PC-9 (cell line): ENCODE measurements at regions of chr11 and their contacts with region 1.

Region 1: DNA sequence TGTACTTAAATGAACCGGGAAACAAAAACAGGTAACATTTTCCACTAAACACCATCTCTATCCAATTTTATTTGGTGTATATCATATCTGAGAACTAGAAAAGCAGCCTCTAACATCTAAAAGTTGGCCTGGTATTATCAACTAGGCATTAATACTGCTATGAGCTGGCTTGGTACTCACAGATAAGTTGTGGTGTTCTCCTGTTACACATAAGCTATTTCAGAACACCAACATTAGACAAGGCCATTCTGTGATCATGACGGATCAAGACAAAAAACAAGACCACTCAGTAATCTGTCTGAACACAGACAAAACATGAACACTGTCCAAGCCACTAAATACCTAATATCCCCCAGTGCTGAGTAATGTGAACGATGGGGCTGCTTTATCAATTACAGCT is 11.9 kb downstream of the RIC3 start:
- DNase-seq: no peak
- H3K4me3 ChIP-seq: no peak overlapping the region
- H3K27ac ChIP-seq: no peak overlapping the region
- H3K4me1 ChIP-seq: no peaks in the 10 kb centered on the region
- H3K27me3 ChIP-seq: no peaks in the 10 kb centered on the region
- CTCF ChIP-seq: no peak

Region 2: DNA sequence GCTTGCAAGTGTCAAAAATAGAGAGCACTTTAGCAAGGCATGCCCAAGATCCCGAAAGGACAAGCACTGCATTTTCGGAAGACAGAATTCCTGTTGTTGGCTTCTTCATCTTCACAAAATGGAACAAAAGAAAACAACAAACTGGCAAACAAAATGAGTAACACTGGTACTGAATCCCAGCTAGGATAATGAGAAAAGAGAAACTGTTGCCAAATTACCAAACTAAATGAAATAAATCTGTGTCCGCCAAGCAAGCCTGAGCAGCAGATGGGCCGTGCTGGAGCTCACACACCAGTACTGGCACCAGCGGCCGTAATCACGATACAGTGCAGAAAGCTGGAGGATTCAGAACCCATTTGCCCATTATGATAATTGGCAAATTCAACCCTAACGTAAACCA is 45.2 kb before region 1 on chr11:
- CTCF ChIA-PET with region 1: no interaction called
- POLR2A ChIA-PET with region 1: no interaction called
- intact Hi-C with region 1: no loop called
- DNase-seq: no peak
- H3K4me3 ChIP-seq: no peak overlapping the region
- H3K27ac ChIP-seq: no peak overlapping the region
- H3K4me1 ChIP-seq: no peaks in the 10 kb centered on the region
- H3K27me3 ChIP-seq: no peaks in the 10 kb centered on the region
- CTCF ChIP-seq: no peak

Region 3: DNA sequence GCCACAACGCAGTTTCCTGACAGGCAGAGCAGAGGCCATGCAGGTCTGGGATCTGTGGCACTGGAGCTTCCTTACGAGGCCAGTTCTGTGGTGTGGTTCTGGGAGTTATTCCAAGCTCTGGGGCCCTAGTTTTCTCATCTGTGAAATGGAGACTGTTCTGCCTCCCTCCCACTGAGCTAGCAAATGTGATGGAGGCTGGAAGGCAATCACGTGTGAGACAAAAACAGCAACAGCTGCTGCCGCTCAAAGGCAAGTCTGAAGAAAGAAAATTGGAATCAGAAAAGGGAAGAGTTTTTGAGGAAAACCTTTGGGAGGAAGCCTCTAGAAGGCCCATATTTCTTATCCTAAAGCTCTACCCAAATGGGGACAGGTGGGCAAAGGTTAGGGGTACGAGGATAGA is 20.3 kb after region 1 on chr11:
- CTCF ChIA-PET with region 1: no interaction called
- POLR2A ChIA-PET with region 1: interaction called, 14 read pairs
- intact Hi-C with region 1: no loop called
- DNase-seq: no peak
- H3K4me3 ChIP-seq: no peak overlapping the region
- H3K27ac ChIP-seq: no peak overlapping the region
- H3K4me1 ChIP-seq: no peaks in the 10 kb centered on the region
- H3K27me3 ChIP-seq: peaks cover 15% of the 10 kb centered on the region; the same call in 1 of the 2 replicates
- CTCF ChIP-seq: no peak

Region 4: GRCh38 chr11:8688414-8689362 is 531.8 kb after region 1 on chr11:
- CTCF ChIA-PET with region 1: no interaction called
- POLR2A ChIA-PET with region 1: no interaction called
- intact Hi-C with region 1: no loop called
- DNase-seq: peak; percentile 90
- H3K4me3 ChIP-seq: peak overlapping the region; percentile 69
- H3K27ac ChIP-seq: peak overlapping the region; percentile 73
- H3K4me1 ChIP-seq: peaks cover 45% of the 10 kb centered on the region
- H3K27me3 ChIP-seq: no peaks in the 10 kb centered on the region
- CTCF ChIP-seq: peak; percentile 24; the same call in 1 of the 2 replicates